Adrenal gland (tissue), 19 donors: ENCODE measurements at regions of chr15 and their contacts with region 1.

Region 1: GRCh38 chr15:82540055-82540983 is at the start of gene RPS17:
- DNase-seq: peak; percentile 95 to 98 (median 97)
- H3K4me3 ChIP-seq: peak within 1 kb of the TSS; percentile 58 to 96 (median 66)
- H3K27ac ChIP-seq: peak within 1 kb of the TSS; percentile 32 to 92 (median 77)
- H3K4me1 ChIP-seq: peaks cover 7 to 18% of the 10 kb centered on the region in 2 donors
- H3K27me3 ChIP-seq: no peaks in the 10 kb centered on the region
- CTCF ChIP-seq: peak; percentile 95 to 100 (median 99)
- POLR2A ChIP-seq: peak; percentile 75 to 94
- total RNA-seq, gene RPS17: 1,210 to 3,062 (median 1,354) TPM

Region 2: GRCh38 chr15:82647045-82647834 is 106.9 kb after region 1 on chr15 and contains the start of gene CPEB1:
- intact Hi-C with region 1: loop called in 1 of 2 experiments (anchors 10 kb)
- DNase-seq: peak; percentile 70 to 75 (median 73)
- H3K4me3 ChIP-seq: peak within 1 kb of the TSS in 3 of 4 donors; percentile 31 to 77 (median 32)
- H3K27ac ChIP-seq: peak within 1 kb of the TSS in 2 of 5 donors; percentile 32 to 50
- H3K4me1 ChIP-seq: peaks cover 12 to 21% of the 10 kb centered on the region in 2 donors
- H3K27me3 ChIP-seq: no peaks in the 10 kb centered on the region
- CTCF ChIP-seq: no peak
- POLR2A ChIP-seq: peak in 1 of 2 donors; percentile 26
- total RNA-seq, gene CPEB1: 1.5 to 11.6 (median 7.1) TPM

Region 3: DNA sequence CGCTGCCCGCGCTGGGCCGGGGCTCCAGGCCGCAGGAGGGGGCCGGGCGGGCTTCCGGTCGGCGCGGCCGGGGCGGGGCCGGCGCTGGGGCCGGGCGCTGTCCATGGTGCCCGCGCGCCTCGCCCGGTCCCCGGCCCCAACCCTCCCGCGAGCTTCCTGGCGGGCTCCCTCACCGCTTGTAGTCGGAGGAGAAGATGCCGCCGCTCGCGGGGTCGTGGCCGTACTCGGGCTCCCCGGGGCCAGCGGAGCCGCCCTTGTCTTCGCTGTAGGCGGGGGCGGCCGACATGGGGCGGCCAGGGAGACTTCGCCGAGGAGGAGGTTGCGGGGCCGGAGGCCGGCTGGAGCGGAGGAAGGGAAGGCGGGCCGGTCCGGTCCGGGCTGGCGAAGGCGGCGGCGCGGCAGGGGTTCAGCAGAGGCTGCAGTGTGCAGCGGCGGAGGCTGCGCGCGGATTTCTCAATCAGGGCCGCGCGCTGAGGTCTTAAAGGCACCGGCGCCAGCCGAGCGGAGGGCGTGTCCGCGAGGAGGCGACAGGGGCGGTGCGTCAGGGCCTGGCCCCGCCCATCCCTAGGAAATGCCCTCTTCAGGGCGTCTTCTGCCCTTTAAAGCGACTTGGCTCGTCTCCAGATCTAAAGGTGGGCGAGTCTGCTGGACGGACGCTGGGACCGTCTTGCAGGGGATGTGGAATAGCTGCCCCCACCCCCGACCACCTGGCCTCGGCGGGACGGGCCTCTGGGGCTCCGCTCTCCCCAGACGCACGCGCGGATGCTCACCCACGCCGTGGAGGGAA is 169.3 kb after region 1 on chr15 and contains the start of gene AP3B2:
- intact Hi-C with region 1: loop called in 1 of 2 experiments (anchors 10 kb)
- DNase-seq: peak; percentile 61 to 80 (median 73)
- H3K4me3 ChIP-seq: peak within 1 kb of the TSS; percentile 39 to 83 (median 68)
- H3K27ac ChIP-seq: peak within 1 kb of the TSS in 3 of 5 donors; percentile 20 to 64 (median 64)
- H3K4me1 ChIP-seq: peaks cover 4 to 6% of the 10 kb centered on the region in 2 donors
- H3K27me3 ChIP-seq: no peaks in the 10 kb centered on the region
- CTCF ChIP-seq: no peak
- POLR2A ChIP-seq: peak in 1 of 2 donors; percentile 53
- total RNA-seq, gene AP3B2: 0.54 to 7.7 (median 3.2) TPM

Region 4: DNA sequence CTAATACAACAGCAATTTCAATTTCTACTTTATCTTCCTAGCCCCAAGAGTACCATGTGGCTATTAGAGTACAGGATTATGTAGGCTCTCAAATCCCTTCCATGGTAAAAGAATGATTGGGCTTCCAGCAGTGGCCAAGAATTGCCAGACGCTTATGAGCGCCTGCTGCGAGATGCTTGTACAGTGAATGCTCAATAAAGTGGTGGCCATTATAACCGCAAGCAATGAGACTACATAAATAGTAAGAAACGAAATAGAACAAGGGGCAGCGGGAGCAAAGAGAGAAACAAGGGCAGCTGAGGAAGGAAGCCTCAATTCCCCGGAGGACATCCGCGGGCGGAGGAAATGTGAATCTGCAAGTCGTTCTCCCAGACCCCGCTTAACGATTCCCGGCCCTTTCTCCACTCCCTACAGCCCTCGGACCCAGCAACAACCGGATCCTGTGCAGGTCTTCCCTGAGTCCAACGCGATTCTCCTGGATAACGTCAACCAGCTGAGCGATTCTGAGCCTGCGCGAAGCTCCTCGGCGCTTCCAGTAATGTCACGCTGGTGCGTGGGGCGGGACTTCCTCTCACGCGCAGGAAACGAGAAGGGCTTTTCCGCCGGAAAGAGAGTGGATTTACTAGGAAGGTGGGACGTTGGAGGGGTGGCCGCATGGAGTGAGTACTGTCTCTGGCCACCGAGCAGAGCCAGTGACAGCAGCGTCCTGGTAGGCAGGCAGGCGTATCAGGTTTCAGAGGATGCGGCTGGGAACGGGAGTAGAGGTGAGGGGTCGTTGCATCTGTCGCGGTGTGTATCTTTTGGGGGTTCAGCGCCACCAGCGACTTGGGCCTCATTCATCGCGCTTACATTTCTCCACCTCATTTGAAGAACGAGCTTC is 209.9 kb after region 1 on chr15:
- intact Hi-C with region 1: loop called in 1 of 2 experiments (anchors 10 kb)
- DNase-seq: peak; percentile 94 to 97 (median 94)
- H3K4me3 ChIP-seq: peak overlapping the region; percentile 25 to 90 (median 74)
- H3K27ac ChIP-seq: peak overlapping the region; percentile 68 to 97 (median 90)
- H3K4me1 ChIP-seq: peaks cover 11 to 22% of the 10 kb centered on the region in 2 donors
- H3K27me3 ChIP-seq: no peaks in the 10 kb centered on the region
- CTCF ChIP-seq: no peak
- POLR2A ChIP-seq: peak; percentile 77 to 93

Region 5: GRCh38 chr15:82809404-82810060 is 269.2 kb after region 1 on chr15 and contains the start of gene WHAMM:
- intact Hi-C with region 1: loop called in 1 of 2 experiments (anchors 10 kb)
- DNase-seq: peak; percentile 99 to 100 (median 99)
- H3K4me3 ChIP-seq: peak within 1 kb of the TSS; percentile 14 to 86 (median 78)
- H3K27ac ChIP-seq: peak within 1 kb of the TSS; percentile 76 to 100 (median 98)
- H3K4me1 ChIP-seq: peaks cover 17 to 29% of the 10 kb centered on the region in 2 donors
- H3K27me3 ChIP-seq: no peaks in the 10 kb centered on the region
- CTCF ChIP-seq: peak in 1 of 6 experiments; percentile 8
- POLR2A ChIP-seq: peak; percentile 82 to 98
- total RNA-seq, gene WHAMM: 3.7 to 10.0 (median 8.7) TPM

Region 6: DNA sequence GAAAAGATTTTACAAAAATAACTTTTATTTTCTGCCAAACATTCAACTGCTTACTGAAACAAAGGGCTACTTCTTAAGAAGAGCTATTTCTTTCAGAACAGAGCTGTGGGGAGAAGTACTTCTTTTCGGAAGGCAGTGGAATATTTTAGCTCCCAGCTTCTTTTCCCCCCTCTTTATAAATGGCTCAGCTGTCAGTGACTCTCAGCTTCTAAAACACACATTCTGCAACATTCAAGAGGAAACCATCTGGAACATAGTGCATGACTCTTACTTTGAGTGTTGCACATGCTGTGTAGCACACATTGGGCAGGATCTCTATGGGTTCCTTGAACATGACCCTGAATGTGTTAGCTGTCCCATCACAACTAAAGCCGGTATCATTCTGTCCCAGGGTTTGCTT is 478.1 kb after region 1 on chr15:
- intact Hi-C with region 1: no loop called
- DNase-seq: no peak
- H3K4me3 ChIP-seq: no peak overlapping the region
- H3K27ac ChIP-seq: no peak overlapping the region
- H3K4me1 ChIP-seq: no peaks in the 10 kb centered on the region
- H3K27me3 ChIP-seq: no peaks in the 10 kb centered on the region
- CTCF ChIP-seq: no peak
- POLR2A ChIP-seq: no peak